Posterior vena cava (tissue), 2 donors: ENCODE measurements at regions of chr1 and their contacts with region 1.

Region 1: DNA sequence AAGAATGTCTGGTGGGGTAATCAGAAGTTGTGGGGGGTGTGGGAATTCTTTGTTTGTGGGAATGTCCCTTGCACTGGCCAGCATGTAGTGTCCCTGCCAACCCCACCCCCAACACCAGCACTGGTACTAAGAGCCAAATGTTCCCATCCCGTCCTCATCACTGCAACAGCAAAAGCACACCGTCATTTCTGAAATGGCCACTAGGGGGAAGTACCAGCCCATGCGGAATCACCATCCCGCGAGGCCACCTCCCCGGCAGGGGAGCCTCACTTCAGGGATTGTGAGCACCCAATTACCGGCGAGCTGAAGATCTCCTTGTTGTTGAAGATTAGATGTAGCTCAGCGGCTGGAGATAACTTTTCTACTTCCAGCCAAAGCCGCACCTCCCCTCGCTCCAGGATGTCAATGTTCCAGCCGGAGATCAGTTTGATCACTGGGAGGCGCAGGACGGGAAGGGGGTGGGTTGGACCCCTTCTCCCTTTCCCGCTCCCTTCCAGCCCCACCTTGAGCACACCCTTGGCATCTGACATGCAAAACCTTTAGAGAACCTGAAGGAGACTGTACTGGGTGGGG is 41.0 kb downstream of the MYOM3 start:
- DNase-seq: peak; percentile 85

Region 2: GRCh38 chr1:23960291-23961020 is 110.5 kb before region 1 on chr1:
- intact Hi-C with region 1: no loop called
- DNase-seq: no peak

Region 3: DNA sequence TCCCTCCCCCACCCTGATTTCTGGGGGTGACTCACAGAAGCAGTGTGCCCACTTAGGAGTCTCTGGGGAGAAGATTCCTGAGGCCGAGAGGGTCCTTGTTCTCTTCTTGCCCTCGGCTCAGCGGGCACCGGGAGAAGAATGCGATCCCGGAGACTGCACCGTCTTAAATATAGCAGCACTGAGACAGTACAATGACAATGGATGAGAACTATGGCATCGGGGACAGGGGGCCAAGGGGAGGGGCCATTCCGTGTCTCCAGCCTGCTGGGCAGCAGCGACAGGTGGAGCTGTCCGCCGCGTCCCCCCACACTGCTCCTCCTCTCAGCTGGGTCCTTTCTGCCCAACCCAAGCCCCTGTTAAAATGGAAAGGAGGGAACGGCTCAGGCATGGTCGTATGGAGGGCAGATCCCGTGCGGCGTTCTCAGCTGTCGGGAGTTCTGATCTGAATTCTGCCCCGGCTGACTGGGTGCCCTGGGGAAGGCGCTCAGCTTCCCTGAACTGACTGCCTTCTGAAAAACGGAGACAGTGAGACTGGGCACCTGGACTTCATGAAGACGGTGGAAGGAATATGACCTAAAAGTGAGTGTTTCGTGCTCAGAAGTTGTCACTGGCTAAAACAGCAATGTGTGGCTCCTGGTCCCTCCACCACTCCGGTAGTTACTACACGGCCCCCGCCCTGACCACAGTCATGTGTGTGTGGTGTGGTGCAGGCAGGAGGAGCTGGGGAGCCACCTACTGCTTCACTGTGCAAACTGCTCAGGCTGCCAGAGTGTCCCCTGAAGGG is 41.3 kb after region 1 on chr1 and contains the start of gene MYOM3:
- intact Hi-C with region 1: loop called in 1 of 2 experiments (anchors 5 kb)
- DNase-seq: peak; percentile 91
- total RNA-seq, gene MYOM3: 0.83 to 1.2 TPM

Region 4: DNA sequence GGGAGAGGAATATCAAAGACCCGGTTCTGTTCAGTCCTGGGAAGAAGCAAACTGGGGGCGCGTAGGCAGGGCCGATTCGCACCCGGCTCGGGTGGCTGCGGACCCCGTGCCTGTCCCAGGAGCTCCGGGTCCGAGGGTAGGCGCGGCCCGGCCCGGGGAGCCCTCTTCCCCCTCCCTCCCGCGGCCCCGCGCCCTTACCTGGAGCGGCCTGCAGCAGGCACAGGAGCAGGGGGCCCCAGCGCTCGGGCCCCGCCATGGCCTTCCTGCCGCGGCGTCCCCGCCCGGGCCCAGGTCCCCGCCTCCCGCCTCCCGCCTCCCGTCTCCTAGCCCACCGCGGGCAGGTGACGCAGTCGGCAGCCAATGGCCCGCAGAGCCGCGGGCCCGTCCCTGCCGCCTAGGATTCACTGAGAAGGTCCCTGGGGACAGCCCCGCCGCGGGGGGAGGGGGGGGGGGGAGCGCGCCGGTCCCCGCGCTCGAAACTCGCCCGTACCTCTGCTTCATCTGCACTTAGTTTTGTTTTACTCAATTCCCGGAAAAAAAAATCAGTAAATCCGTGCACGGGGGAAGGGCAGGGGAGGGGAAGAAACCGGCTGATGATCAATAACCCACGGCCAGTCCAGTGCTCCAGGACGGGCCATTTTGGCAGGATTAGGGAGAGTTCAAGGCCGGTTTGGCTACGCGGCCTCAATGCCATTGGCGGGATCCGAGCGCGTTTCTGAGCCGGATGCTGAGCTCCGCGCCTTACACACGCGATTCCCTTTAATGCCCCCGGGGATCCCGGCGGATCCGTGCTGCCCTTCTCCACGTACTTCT is 116.3 kb after region 1 on chr1 and contains the start of gene IFNLR1:
- intact Hi-C with region 1: loop called in 1 of 2 experiments (anchors 10 kb)
- DNase-seq: no peak
- total RNA-seq, gene IFNLR1: 0.43 to 0.51 TPM